ENCODE measurements at regions of chr1 and their contacts with region 1.

Region 1: GRCh38 chr1:157580179-157580827 is 17.6 kb downstream of the FCRL4 start:
- DNase-seq: peak; percentile 49 to 66
- H3K4me3 ChIP-seq: no peak overlapping the region
- H3K4me3 Mint-ChIP-seq: no peak overlapping the region
- H3K27ac Mint-ChIP-seq: no peak overlapping the region
- H3K4me1 ChIP-seq: no peaks in the 10 kb centered on the region
- H3K4me1 Mint-ChIP-seq: no peaks in the 10 kb centered on the region
- H3K27me3 ChIP-seq: no peaks in the 10 kb centered on the region
- H3K27me3 Mint-ChIP-seq: peaks cover 15% of the 10 kb centered on the region
- CTCF ChIP-seq: peak; percentile 70 to 74

Region 2: DNA sequence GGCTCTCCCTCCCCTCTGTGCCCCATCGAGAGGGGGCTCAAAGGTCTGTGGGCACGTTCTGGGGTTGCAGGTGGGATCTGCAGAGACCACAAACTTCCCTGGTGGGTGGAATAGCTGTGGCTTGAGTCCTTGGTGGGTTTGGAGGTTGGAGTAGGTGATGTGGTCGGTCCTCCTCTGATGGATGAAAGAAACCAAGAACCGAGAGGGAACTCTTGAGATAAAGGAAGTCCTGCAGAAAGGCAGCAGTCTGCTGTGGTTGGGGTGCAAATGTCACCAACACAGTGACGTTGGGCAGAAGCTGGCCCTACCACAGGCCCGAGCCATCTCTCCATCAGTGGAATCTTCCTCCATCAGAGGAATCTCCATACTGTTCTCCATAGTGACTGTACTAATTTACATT is 199.8 kb before region 1 on chr1:
- CTCF ChIA-PET with region 1: no interaction called
- POLR2A ChIA-PET with region 1: no interaction called
- intact Hi-C with region 1: no loop called
- DNase-seq: no peak
- H3K4me3 ChIP-seq: no peak overlapping the region
- H3K4me3 Mint-ChIP-seq: no peak overlapping the region
- H3K27ac Mint-ChIP-seq: no peak overlapping the region
- H3K4me1 ChIP-seq: no peaks in the 10 kb centered on the region
- H3K4me1 Mint-ChIP-seq: no peaks in the 10 kb centered on the region
- H3K27me3 ChIP-seq: no peaks in the 10 kb centered on the region
- H3K27me3 Mint-ChIP-seq: no peaks in the 10 kb centered on the region
- CTCF ChIP-seq: no peak

Region 3: DNA sequence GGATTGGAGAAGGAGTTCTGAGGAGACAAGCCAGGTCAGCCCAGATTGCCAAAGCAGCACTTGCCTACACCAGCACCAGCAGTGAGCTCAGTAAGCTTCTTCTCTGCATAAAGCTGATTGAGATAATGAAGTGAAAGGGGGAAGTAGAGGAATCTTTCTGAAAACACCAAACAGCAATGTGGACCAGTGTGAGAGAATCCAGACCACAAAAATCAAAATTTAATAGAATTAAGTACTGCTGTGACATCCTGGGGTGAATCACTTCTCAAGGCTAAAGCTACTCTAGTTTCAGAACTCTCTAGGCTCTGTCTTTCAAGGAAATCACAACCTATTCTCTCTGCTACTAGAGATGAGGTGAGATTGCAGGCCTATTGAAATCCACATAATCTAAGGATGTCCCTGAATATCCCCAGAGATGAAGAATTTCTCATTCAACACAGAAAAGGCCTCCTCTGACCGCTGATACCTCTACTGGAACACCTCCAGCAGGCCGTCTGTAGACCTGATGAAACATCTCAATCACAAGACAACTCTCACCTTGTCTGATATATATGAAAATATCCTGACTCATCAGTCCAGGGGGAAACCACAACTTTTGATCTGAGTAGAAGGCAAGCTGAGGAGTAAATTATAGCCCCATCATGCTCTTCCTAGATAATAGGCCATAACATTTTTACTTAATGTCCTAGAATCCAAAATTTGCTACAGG is 17.8 kb after region 1 on chr1 and contains the start of gene FCRL4:
- CTCF ChIA-PET with region 1: interaction called, 10 read pairs
- POLR2A ChIA-PET with region 1: interaction called, 3 read pairs
- intact Hi-C with region 1: no loop called
- DNase-seq: no peak
- H3K4me3 ChIP-seq: no peak within 1 kb of the TSS
- H3K4me3 Mint-ChIP-seq: no peak within 1 kb of the TSS
- H3K27ac Mint-ChIP-seq: no peak within 1 kb of the TSS
- H3K4me1 ChIP-seq: no peaks in the 10 kb centered on the region
- H3K4me1 Mint-ChIP-seq: no peaks in the 10 kb centered on the region
- H3K27me3 ChIP-seq: no peaks in the 10 kb centered on the region; the same call in 1 of the 2 replicates
- H3K27me3 Mint-ChIP-seq: peaks cover 11% of the 10 kb centered on the region
- CTCF ChIP-seq: no peak
- total RNA-seq, gene FCRL4: not detected in 2 replicates

Region 4: GRCh38 chr1:157626099-157626498 is 45.8 kb after region 1 on chr1:
- CTCF ChIA-PET with region 1: interaction called, 3 read pairs
- POLR2A ChIA-PET with region 1: no interaction called
- intact Hi-C with region 1: loop called (anchors 1 kb)
- DNase-seq: peak; percentile 40 to 45
- H3K4me3 ChIP-seq: no peak overlapping the region
- H3K4me3 Mint-ChIP-seq: no peak overlapping the region
- H3K27ac Mint-ChIP-seq: no peak overlapping the region
- H3K4me1 ChIP-seq: no peaks in the 10 kb centered on the region
- H3K4me1 Mint-ChIP-seq: no peaks in the 10 kb centered on the region
- H3K27me3 ChIP-seq: no peaks in the 10 kb centered on the region
- H3K27me3 Mint-ChIP-seq: peaks cover 11% of the 10 kb centered on the region
- CTCF ChIP-seq: peak; percentile 45 to 54

Region 5: GRCh38 chr1:157691285-157691920 is 111.1 kb after region 1 on chr1:
- CTCF ChIA-PET with region 1: interaction called, 34 read pairs
- POLR2A ChIA-PET with region 1: no interaction called
- intact Hi-C with region 1: loop called (anchors 1 kb)
- DNase-seq: peak in 1 of 2 experiments; percentile 30
- H3K4me3 ChIP-seq: no peak overlapping the region
- H3K4me3 Mint-ChIP-seq: no peak overlapping the region
- H3K27ac Mint-ChIP-seq: no peak overlapping the region
- H3K4me1 ChIP-seq: no peaks in the 10 kb centered on the region
- H3K4me1 Mint-ChIP-seq: no peaks in the 10 kb centered on the region
- H3K27me3 ChIP-seq: no peaks in the 10 kb centered on the region
- H3K27me3 Mint-ChIP-seq: peaks cover 10% of the 10 kb centered on the region
- CTCF ChIP-seq: peak; percentile 56 to 64

Region 6: DNA sequence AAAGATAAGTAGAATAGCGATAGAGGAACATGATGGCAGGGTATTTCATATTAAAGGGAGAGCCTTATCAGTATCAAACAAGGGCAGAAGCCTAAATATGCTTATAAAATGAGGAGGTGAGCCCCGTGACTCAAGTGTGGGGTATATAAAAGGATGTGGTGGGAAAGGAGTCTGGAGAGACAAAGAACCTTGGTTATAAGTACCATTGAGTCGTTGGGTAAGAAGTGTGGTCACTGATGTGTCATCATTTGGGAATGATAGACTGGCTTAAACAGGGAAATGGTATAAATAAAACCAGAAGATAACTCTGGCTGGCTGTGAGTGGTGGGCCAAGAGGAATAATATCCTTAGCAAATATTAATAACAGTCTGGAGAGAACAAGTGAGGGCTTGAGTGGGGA is 272.2 kb after region 1 on chr1:
- CTCF ChIA-PET with region 1: no interaction called
- POLR2A ChIA-PET with region 1: no interaction called
- intact Hi-C with region 1: loop called (anchors 10 kb)
- DNase-seq: no peak
- H3K4me3 ChIP-seq: no peak overlapping the region
- H3K4me3 Mint-ChIP-seq: no peak overlapping the region
- H3K27ac Mint-ChIP-seq: no peak overlapping the region
- H3K4me1 ChIP-seq: no peaks in the 10 kb centered on the region
- H3K4me1 Mint-ChIP-seq: no peaks in the 10 kb centered on the region
- H3K27me3 ChIP-seq: no peaks in the 10 kb centered on the region
- H3K27me3 Mint-ChIP-seq: peaks cover 7% of the 10 kb centered on the region
- CTCF ChIP-seq: no peak

Region 7: GRCh38 chr1:157948312-157949073 is 368.2 kb after region 1 on chr1:
- CTCF ChIA-PET with region 1: interaction called, 5 read pairs
- POLR2A ChIA-PET with region 1: no interaction called
- intact Hi-C with region 1: loop called (anchors 2 kb)
- DNase-seq: peak; percentile 52 to 61
- H3K4me3 ChIP-seq: no peak overlapping the region
- H3K4me3 Mint-ChIP-seq: no peak overlapping the region
- H3K27ac Mint-ChIP-seq: no peak overlapping the region
- H3K4me1 ChIP-seq: peaks cover 34% of the 10 kb centered on the region
- H3K4me1 Mint-ChIP-seq: peaks cover 20% of the 10 kb centered on the region
- H3K27me3 ChIP-seq: no peaks in the 10 kb centered on the region
- H3K27me3 Mint-ChIP-seq: no peaks in the 10 kb centered on the region
- CTCF ChIP-seq: peak; percentile 62 to 90

Measured in Caco-2 (cell line).